ENCODE measurements at regions of chrX and their contacts with region 1.

Region 1: GRCh38 chrX:149470955-149471354 is 34.2 kb downstream of the IDS start:
- DNase-seq: peak; percentile 77
- H3K4me3 Mint-ChIP-seq: no peak overlapping the region
- H3K27ac Mint-ChIP-seq: no peak overlapping the region
- H3K4me1 Mint-ChIP-seq: no peaks in the 10 kb centered on the region
- H3K27me3 Mint-ChIP-seq: no peaks in the 10 kb centered on the region
- CTCF ChIP-seq: peak; percentile 82

Region 2: GRCh38 chrX:148049441-148049840 is 1421.5 kb before region 1 on chrX:
- CTCF ChIA-PET with region 1: interaction called, 8 read pairs
- POLR2A ChIA-PET with region 1: no interaction called
- intact Hi-C with region 1: loop called (anchors 1 kb)
- DNase-seq: peak; percentile 38
- H3K4me3 Mint-ChIP-seq: no peak overlapping the region
- H3K27ac Mint-ChIP-seq: no peak overlapping the region
- H3K4me1 Mint-ChIP-seq: no peaks in the 10 kb centered on the region
- H3K27me3 Mint-ChIP-seq: no peaks in the 10 kb centered on the region
- CTCF ChIP-seq: peak; percentile 42

Region 3: GRCh38 chrX:148609515-148610327 is 861.2 kb before region 1 on chrX:
- CTCF ChIA-PET with region 1: no interaction called
- POLR2A ChIA-PET with region 1: no interaction called
- intact Hi-C with region 1: loop called (anchors 10 kb)
- DNase-seq: peak; percentile 56
- H3K4me3 Mint-ChIP-seq: no peak overlapping the region
- H3K27ac Mint-ChIP-seq: no peak overlapping the region
- H3K4me1 Mint-ChIP-seq: no peaks in the 10 kb centered on the region
- H3K27me3 Mint-ChIP-seq: no peaks in the 10 kb centered on the region
- CTCF ChIP-seq: no peak

Region 4: GRCh38 chrX:149151805-149152757 is 318.9 kb before region 1 on chrX:
- CTCF ChIA-PET with region 1: no interaction called
- POLR2A ChIA-PET with region 1: no interaction called
- intact Hi-C with region 1: loop called (anchors 10 kb)
- DNase-seq: peak; percentile 88
- H3K4me3 Mint-ChIP-seq: no peak overlapping the region
- H3K27ac Mint-ChIP-seq: no peak overlapping the region
- H3K4me1 Mint-ChIP-seq: no peaks in the 10 kb centered on the region
- H3K27me3 Mint-ChIP-seq: no peaks in the 10 kb centered on the region
- CTCF ChIP-seq: no peak

Region 5: GRCh38 chrX:149306445-149306844 is 164.5 kb before region 1 on chrX:
- CTCF ChIA-PET with region 1: interaction called, 16 read pairs
- POLR2A ChIA-PET with region 1: no interaction called
- intact Hi-C with region 1: loop called (anchors 2 kb)
- DNase-seq: no peak
- H3K4me3 Mint-ChIP-seq: no peak overlapping the region
- H3K27ac Mint-ChIP-seq: no peak overlapping the region
- H3K4me1 Mint-ChIP-seq: peaks cover 6% of the 10 kb centered on the region
- H3K27me3 Mint-ChIP-seq: no peaks in the 10 kb centered on the region
- CTCF ChIP-seq: no peak